Left colon (tissue), 2 donors: ENCODE measurements at regions of chr7 and their contacts with region 1.

Region 1: DNA sequence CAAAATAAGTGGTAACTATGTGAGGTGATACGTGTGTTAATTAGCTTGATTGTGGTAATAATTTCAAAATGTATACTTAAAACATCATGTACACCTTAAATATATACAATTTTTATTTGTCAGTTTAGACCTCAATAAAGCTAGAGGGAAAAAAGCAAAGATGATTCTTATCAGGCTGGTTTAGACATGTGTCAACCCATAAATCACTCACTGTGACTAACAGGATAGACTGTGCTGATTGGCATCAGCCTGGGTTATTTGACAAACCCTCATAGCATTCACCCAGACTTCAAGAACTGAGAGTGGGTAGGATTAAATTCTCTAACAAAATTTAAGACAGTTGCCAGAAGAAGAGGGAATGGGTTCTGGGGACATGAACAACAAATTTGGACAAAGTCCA is 73.8 kb upstream of the TMEM140 start:
- DNase-seq: no peak
- ATAC-seq: no peak

Region 2: DNA sequence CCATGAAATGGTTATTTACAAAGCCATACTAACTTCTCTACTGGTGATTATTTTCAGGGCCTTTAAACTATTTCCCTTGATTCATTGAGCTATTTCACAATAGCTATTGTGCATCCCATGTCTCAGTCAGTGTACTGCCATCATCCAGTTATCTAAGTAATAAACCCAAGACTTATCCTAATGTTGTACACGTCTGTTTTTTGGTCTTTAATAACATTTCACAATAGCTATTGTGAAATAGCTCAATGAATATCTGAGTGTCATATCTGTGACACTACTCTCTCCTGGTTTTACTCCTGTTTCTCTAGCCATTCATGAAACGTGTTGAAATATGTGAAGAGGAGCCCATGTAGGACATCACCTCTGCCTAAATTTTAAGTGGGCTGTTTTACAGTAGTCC is 37.3 kb after region 1 on chr7:
- intact Hi-C with region 1: loop called in 1 of 2 experiments (anchors 10 kb)
- DNase-seq: no peak
- ATAC-seq: no peak